ENCODE measurements at regions of chr5 and their contacts with region 1.

Region 1: GRCh38 chr5:129003226-129003625 is 37.9 kb downstream of the SLC27A6 start:
- DNase-seq: no peak
- ATAC-seq: no peak
- H3K4me3 ChIP-seq: no peak overlapping the region
- H3K27ac ChIP-seq: no peak overlapping the region
- H3K4me1 ChIP-seq: no peaks in the 10 kb centered on the region
- H3K27me3 ChIP-seq: no peaks in the 10 kb centered on the region
- CTCF ChIP-seq: no peak
- POLR2A ChIP-seq: no peak
- RAD21 ChIP-seq: no peak

Region 2: DNA sequence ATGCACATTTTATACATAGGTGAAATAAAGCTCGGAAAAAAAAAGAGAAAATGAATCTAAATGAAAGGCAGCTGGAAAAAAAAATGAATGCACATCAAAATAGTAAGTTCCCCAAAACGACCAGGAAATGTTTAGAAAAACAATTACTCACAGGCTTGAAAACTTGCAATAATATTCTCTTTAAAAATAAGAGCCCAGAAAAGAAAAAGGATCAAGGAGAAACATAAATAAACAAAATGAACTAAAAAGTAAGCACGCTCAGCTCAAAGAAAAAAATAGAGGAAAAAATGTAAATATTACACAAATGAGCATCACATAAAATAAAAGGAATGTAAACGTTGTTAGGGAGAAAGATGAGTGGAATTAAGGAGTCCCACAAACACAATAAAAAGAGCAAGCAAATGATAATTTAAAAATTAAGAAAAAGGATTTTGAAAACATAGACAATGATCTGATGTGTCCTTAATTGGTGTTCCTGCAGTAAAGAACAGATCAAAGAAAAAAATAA is 16.2 kb after region 1 on chr5:
- CTCF ChIA-PET with region 1: no interaction called
- POLR2A ChIA-PET with region 1: no interaction called
- dilution Hi-C with region 1: no loop called
- in situ Hi-C with region 1: no loop called
- intact Hi-C with region 1: loop called (anchors 2 kb)
- DNase-seq: peak; percentile 17
- ATAC-seq: peak; percentile 92
- H3K4me3 ChIP-seq: no peak overlapping the region
- H3K27ac ChIP-seq: no peak overlapping the region
- H3K4me1 ChIP-seq: no peaks in the 10 kb centered on the region
- H3K27me3 ChIP-seq: no peaks in the 10 kb centered on the region; the same call in 1 of the 2 replicates
- CTCF ChIP-seq: no peak
- POLR2A ChIP-seq: no peak
- RAD21 ChIP-seq: no peak

Measured in IMR-90 (cell line).